ENCODE measurements at regions of chr19 and their contacts with region 1.

Region 1: DNA sequence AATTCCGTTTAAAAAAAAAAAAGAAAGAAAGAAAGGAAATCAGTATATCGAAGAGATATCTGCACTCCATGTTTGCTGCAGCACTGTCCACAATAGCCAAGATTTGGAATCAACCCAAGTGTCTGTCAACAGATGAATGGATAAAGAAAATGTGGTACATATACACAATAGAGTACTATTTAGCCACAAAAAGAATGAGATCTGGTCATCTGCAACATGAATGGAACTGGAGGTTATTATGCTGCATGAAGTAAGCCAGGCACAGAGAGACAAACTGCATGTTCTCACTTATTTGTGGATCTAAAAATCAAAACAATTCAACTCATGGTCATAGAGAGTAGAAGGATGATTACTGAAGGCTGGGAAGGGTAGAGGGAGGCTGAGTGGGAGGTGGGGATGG is 16.3 kb downstream of the ZNF565 start:
- DNase-seq: peak in 2 of 10 donors; percentile 13 to 35
- H3K4me3 ChIP-seq: peak overlapping the region in 18 of 59 donors; percentile 0 to 36 (median 15)
- H3K27ac ChIP-seq: peak overlapping the region in 58 of 59 donors; percentile 66 to 99 (median 92)
- H3K27me3 ChIP-seq: no peaks in the 10 kb centered on the region
- CTCF ChIP-seq: no peak

Region 2: GRCh38 chr19:36041831-36042230 is 156.3 kb before region 1 on chr19:
- intact Hi-C with region 1: no loop called
- DNase-seq: no peak
- H3K4me3 ChIP-seq: no peak overlapping the region
- H3K27ac ChIP-seq: no peak overlapping the region
- H3K27me3 ChIP-seq: no peaks in the 10 kb centered on the region
- CTCF ChIP-seq: no peak

Region 3: DNA sequence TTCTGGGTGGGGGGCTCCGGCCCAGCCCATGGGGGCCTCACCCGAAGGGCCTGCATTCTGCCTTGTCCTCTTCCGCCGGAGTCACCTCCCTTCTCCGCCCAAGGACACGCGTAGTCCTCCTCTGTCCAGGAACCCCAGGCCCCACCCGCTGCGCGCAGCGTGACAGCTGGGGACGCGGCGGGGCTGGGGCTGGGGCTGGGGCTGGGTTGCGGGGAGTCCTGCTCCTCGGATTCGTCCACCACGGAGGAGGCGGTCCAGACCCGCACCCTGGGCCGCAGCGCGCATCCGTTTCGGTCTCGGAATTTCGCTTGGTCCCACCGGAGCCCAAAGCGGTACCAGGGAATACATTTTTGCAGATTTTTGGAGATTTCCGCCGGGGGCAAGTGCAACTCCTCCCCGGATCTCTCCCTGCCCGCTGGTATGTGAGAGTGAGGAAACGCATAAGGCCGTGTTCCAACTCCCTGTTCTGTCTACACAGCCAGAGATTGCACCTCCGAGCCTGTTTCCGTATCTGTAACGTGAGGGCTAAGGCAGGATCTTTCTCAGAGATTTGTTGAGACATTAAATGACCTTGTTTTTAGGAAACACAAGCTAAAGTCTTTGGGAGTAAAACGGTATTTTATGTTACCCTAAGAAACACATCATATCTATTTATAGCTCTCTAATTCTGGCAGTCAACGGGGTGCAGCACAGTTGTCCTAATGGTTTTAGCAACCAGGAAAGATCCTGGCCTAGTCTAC is 45.6 kb before region 1 on chr19 and contains the start of gene COX7A1:
- intact Hi-C with region 1: no loop called
- DNase-seq: peak in 7 of 10 donors; percentile 35 to 74 (median 55)
- H3K4me3 ChIP-seq: peak within 1 kb of the TSS in 57 of 59 donors; percentile 12 to 71 (median 53)
- H3K27ac ChIP-seq: peak within 1 kb of the TSS in 58 of 59 donors; percentile 16 to 93 (median 82)
- H3K27me3 ChIP-seq: no peaks in the 10 kb centered on the region
- CTCF ChIP-seq: no peak
- total RNA-seq, gene COX7A1: 37.0 to 216 (median 117) TPM

Region 4: DNA sequence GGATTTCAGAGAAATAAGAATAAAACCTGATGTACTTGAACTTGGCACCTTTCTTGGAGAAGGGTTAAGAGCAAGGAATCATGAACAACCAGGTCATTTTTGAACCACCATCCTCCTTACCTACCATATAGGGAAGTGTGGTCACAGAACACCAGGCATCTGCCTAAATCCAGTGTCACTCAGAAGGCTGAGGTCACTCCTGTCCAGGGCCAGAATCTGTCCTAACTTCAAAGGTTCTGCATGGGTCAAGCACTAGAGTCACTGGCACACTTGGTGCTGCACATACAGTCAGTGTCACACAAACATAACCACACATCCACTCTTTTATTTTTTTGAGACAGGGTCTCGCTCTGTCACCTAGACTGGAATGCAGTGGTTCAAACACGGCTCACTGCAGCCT is 14.8 kb after region 1 on chr19:
- intact Hi-C with region 1: loop called in 1 of 2 experiments (anchors 1 kb)
- DNase-seq: no peak
- H3K4me3 ChIP-seq: peak overlapping the region in 8 of 59 donors; percentile 85 to 97 (median 94)
- H3K27ac ChIP-seq: peak overlapping the region in 38 of 59 donors; percentile 9 to 100 (median 98)
- H3K27me3 ChIP-seq: no peaks in the 10 kb centered on the region
- CTCF ChIP-seq: no peak

Region 5: GRCh38 chr19:36236304-36236945 is 38.3 kb after region 1 on chr19:
- intact Hi-C with region 1: no loop called
- DNase-seq: no peak
- H3K4me3 ChIP-seq: no peak overlapping the region
- H3K27ac ChIP-seq: no peak overlapping the region
- H3K27me3 ChIP-seq: no peaks in the 10 kb centered on the region
- CTCF ChIP-seq: no peak